Activated T-helper 1 cell treated with anti-CD3 and anti-CD28 coated beads, Interleukin-12 subunit alpha, Interleukin-12 subunit beta, Interleukin-2, Interleukin-4 antibody, amounts not matched to agents 30 ng/mL and 10 ng/mL and 1 ng/mL, durations not matched to agents 14 hours and 24 hours and 36 hours (primary cell): ENCODE measurements at regions of chr5 and their contacts with region 1.

Region 1: DNA sequence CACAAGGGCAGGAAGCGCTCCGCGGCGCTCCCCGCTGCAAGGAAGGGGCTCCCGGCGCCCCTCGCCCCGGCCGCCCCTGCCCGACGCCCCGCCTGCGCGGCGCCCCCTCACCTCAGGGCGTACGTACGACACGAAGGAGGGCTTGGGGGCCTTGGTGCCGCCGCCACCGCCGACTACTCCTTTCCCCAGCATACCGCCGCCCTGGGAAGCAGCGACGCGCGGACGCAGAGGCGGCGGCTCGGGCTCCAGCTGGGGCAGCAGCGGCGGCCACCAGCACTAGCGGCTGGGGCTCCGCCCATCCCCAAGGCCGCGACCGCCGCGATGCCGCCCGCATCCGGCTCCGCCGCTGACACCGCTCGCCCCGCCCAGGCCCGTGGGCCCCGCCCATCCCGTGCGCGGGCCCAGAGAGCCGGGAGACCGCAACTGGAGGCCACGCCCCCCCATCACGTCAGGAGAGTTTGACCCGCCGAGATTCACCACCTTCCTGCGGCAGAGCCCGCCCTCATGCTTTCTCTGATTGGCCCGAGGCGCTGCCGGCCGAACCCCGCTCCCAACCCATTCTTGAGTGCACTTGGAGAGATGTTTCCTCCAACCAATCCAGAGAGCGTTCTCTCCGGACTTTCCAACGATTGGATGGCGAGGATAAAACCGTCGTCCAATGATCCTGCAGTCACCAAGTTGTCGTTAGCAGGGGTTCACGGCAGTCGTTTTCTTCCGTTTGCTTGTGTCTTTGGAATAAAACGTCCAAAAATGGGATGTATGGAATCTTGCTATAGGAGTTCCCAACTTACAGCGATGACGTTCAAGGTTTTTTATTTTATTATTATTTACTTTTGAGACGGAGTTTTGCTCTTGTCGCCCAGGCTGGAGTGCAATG is at the start of gene MTMR12:
- DNase-seq: peak; percentile 100
- H3K4me3 Mint-ChIP-seq: peak within 1 kb of the TSS; percentile 96
- H3K27ac Mint-ChIP-seq: peak within 1 kb of the TSS; percentile 95
- H3K4me1 Mint-ChIP-seq: peaks cover 38% of the 10 kb centered on the region
- H3K27me3 Mint-ChIP-seq: no peaks in the 10 kb centered on the region
- total RNA-seq, gene MTMR12: 26.2 and 29.9 TPM in 2 replicates

Region 2: GRCh38 chr5:32241034-32241783 is 71.7 kb before region 1 on chr5:
- intact Hi-C with region 1: no loop called
- DNase-seq: no peak
- H3K4me3 Mint-ChIP-seq: no peak overlapping the region
- H3K27ac Mint-ChIP-seq: no peak overlapping the region
- H3K4me1 Mint-ChIP-seq: no peaks in the 10 kb centered on the region
- H3K27me3 Mint-ChIP-seq: no peaks in the 10 kb centered on the region

Region 3: GRCh38 chr5:32298059-32298415 is 14.8 kb before region 1 on chr5:
- intact Hi-C with region 1: loop called (anchors 2 kb)
- DNase-seq: no peak
- H3K4me3 Mint-ChIP-seq: peak overlapping the region; percentile 12
- H3K27ac Mint-ChIP-seq: peak overlapping the region; percentile 8
- H3K4me1 Mint-ChIP-seq: peaks cover 26% of the 10 kb centered on the region
- H3K27me3 Mint-ChIP-seq: no peaks in the 10 kb centered on the region

Region 4: GRCh38 chr5:32355686-32356085 is 42.8 kb after region 1 on chr5:
- intact Hi-C with region 1: no loop called
- DNase-seq: no peak
- H3K4me3 Mint-ChIP-seq: no peak overlapping the region
- H3K27ac Mint-ChIP-seq: no peak overlapping the region
- H3K4me1 Mint-ChIP-seq: peaks cover 4% of the 10 kb centered on the region
- H3K27me3 Mint-ChIP-seq: no peaks in the 10 kb centered on the region

Region 5: DNA sequence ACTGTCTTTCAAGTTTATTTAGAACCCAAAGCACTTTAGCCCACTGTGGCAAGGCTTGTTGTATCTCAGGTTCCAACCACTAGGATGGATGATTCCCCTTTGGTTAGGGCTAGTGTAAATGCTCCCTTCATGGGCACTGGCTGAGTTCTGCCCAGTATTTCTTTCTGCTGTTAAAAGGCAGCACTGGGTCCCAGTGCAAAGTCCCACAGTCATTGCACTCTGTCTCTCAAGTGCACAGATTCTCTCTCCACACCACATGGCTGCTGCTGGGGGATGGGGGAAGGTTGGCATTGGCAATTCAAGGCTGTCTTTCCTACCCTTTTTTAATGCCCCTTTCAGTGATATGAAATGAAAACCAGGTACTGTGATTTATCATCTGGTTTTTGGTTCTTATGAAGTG is 391.1 kb after region 1 on chr5:
- intact Hi-C with region 1: no loop called
- DNase-seq: no peak
- H3K4me3 Mint-ChIP-seq: no peak overlapping the region
- H3K27ac Mint-ChIP-seq: no peak overlapping the region
- H3K4me1 Mint-ChIP-seq: no peaks in the 10 kb centered on the region
- H3K27me3 Mint-ChIP-seq: peaks cover 8% of the 10 kb centered on the region

Region 6: DNA sequence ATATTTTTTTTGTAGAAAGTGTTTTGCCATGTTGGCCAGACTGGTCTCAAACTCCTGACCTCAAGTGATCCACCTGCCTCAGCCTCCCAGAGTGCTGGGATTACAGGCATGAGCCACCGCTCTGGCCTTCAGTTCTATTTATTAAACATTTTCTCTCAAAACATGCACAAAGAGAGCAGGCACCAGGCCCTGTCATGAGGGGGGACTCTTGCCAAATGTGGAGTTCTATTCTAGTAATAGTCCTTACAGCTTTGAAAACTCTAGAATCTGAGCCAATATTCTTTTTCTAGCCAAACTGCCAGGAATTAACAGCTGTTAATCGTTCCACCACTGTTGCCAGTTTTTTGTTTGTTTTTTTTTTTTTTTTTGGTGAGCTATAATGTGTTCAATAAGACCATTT is 1252.4 kb after region 1 on chr5:
- intact Hi-C with region 1: no loop called
- DNase-seq: no peak
- H3K4me3 Mint-ChIP-seq: no peak overlapping the region
- H3K27ac Mint-ChIP-seq: no peak overlapping the region
- H3K4me1 Mint-ChIP-seq: no peaks in the 10 kb centered on the region
- H3K27me3 Mint-ChIP-seq: no peaks in the 10 kb centered on the region